K562 (cell line): ENCODE measurements at regions of chr6 and their contacts with region 1.

Region 1: DNA sequence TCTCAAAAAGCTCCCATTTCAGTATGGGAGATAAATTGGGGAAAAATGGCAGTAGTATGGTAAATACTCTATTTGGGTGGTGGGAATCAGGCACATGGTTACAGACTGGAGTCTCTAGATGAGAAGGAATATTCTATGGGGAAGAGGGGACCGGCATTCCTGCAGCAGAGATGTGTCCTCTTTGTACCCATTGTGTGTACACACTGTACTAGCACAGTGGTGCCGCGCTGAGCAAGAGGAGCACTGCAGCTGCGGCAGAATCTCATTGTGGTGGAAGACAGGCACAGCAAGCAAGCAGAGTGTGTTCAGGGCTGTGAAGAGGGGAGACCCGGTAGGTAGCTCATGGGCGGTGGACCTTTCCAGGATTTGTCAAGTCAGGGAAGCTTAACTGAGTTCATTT is 13.0 kb downstream of the AFDN start:
- DNase-seq: peak in 1 of 4 experiments; percentile 67
- ATAC-seq: peak; percentile 75
- H3K4me3 ChIP-seq: no peak overlapping the region
- H3K27ac ChIP-seq: peak overlapping the region; percentile 85
- H3K4me1 ChIP-seq: peaks cover 9 to 70% of the 10 kb centered on the region in 2 experiments
- H3K27me3 ChIP-seq: no peaks in the 10 kb centered on the region
- CTCF ChIP-seq: peak in 2 of 3 experiments; percentile 23 to 57; a peak in 4 of 6 replicates
- EP300 ChIP-seq: no peak
- POLR2A ChIP-seq: no peak
- RAD21 ChIP-seq: no peak; a peak in 1 of 4 replicates

Region 2: GRCh38 chr6:167826230-167826895 is 13.4 kb before region 1 on chr6:
- CTCF ChIA-PET with region 1: no interaction called
- POLR2A ChIA-PET with region 1: interaction called, 45 read pairs
- in situ Hi-C with region 1: no loop called
- intact Hi-C with region 1: no loop called
- DNase-seq: peak; percentile 51 to 90 (median 76)
- ATAC-seq: peak; percentile 70
- H3K4me3 ChIP-seq: peak overlapping the region; percentile 85
- H3K27ac ChIP-seq: peak overlapping the region; percentile 56
- H3K4me1 ChIP-seq: peaks cover 24 to 30% of the 10 kb centered on the region in 2 experiments
- H3K27me3 ChIP-seq: no peaks in the 10 kb centered on the region
- CTCF ChIP-seq: peak; percentile 31 to 69 (median 58); a peak in 4 of 6 replicates
- EP300 ChIP-seq: no peak
- POLR2A ChIP-seq: no peak
- RAD21 ChIP-seq: peak in 1 of 2 experiments; percentile 33; a peak in 3 of 4 replicates

Region 3: DNA sequence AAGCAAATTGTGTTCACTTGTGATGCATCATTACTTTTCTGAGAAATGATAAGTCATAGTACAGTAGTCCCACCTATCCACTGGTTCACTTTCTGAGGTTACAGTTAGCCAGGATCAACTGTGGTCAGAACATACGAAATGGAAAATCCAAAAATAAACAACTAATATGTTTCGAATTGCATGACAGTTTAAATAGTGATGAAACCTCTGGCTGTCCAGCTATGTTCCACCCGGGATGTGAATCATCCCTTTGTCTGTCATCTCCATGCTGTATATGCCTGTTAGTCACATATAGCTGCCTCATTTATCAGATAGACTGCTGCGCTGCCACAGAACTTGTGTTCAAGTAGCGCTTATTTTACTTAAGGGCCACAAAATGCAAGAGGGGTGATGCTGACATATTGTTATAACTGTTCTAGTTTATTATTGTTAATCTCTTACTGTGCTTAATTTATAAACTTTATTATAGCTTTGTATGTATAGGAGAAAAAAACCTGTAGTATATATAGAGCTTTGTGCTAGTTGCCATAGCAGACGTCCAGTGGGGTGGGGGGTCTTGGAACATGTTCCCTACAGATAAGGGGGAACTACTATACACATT is 16.2 kb after region 1 on chr6:
- CTCF ChIA-PET with region 1: no interaction called
- POLR2A ChIA-PET with region 1: interaction called, 20 read pairs
- in situ Hi-C with region 1: no loop called
- intact Hi-C with region 1: loop called (anchors 2 kb)
- DNase-seq: peak; percentile 54 to 92 (median 72)
- ATAC-seq: peak; percentile 75
- H3K4me3 ChIP-seq: peak overlapping the region; percentile 2; the same call in 1 of the 2 replicates
- H3K27ac ChIP-seq: peak overlapping the region; percentile 96
- H3K4me1 ChIP-seq: peaks cover 7 to 83% of the 10 kb centered on the region in 2 experiments
- H3K27me3 ChIP-seq: no peaks in the 10 kb centered on the region
- CTCF ChIP-seq: no peak
- EP300 ChIP-seq: peak; percentile 93
- POLR2A ChIP-seq: peak; percentile 59
- RAD21 ChIP-seq: no peak